WTC11 (cell line): ENCODE measurements at regions of chr4 and their contacts with region 1.

Region 1: GRCh38 chr4:154416190-154416547 is 75.4 kb downstream of the DCHS2 start:
- DNase-seq: peak; percentile 59
- ATAC-seq: peak; percentile 74
- H3K4me3 Mint-ChIP-seq: peak overlapping the region; percentile 95
- H3K27ac Mint-ChIP-seq: no peak overlapping the region
- H3K4me1 Mint-ChIP-seq: peaks cover 19% of the 10 kb centered on the region
- H3K27me3 Mint-ChIP-seq: peaks cover 17% of the 10 kb centered on the region
- CTCF ChIP-seq: no peak

Region 2: DNA sequence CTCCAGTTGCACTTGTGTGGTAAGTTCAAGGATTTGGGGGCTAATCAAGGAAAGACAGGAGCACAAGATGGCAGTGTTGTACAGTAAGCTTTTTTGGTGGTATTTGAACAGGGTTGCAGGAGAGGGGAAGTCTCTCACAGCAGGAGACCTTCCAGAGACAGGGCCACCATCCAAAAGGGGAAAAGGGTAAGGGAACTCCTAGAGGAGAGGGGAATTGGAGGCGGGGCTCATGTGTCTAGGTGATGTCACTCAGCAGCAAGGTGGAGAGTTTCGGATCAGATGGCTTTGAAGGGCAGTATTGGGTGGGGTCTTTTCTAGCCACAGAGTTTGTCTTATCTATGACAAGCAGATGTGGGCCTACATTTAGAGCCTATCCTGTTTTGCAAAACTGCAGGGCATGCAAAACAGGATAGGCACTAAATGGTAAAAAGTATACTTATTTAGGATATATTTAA is 642.9 kb before region 1 on chr4:
- CTCF ChIA-PET with region 1: no interaction called
- POLR2A ChIA-PET with region 1: no interaction called
- DNase-seq: peak; percentile 68
- ATAC-seq: peak; percentile 99
- H3K4me3 Mint-ChIP-seq: no peak overlapping the region
- H3K27ac Mint-ChIP-seq: peak overlapping the region; percentile 32; the same call in 1 of the 2 replicates
- H3K4me1 Mint-ChIP-seq: peaks cover 28% of the 10 kb centered on the region
- H3K27me3 Mint-ChIP-seq: no peaks in the 10 kb centered on the region
- CTCF ChIP-seq: no peak

Region 3: DNA sequence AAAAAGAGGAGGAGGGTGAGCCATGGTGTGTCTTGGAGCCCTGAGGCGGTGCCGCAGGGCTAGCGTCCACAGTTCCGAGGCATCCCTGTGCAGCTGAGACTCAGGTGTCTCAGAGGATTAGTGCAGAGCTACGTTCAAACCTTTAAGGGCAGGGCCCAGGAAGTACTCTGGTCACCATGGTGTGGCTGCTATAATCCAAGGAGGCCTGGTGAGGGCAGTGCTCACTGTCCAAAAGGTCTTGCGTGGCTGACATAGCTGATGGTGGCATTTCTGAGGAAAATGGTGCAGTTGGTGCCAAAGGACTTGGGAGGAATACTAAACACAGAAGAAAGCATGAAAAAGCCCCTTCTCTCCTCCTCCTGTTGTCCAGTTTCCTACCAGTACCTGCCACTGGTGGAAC is 71.5 kb before region 1 on chr4:
- CTCF ChIA-PET with region 1: interaction called, 11 read pairs
- POLR2A ChIA-PET with region 1: no interaction called
- DNase-seq: peak; percentile 42
- ATAC-seq: peak; percentile 99
- H3K4me3 Mint-ChIP-seq: no peak overlapping the region
- H3K27ac Mint-ChIP-seq: no peak overlapping the region
- H3K4me1 Mint-ChIP-seq: no peaks in the 10 kb centered on the region
- H3K27me3 Mint-ChIP-seq: no peaks in the 10 kb centered on the region
- CTCF ChIP-seq: no peak

Region 4: GRCh38 chr4:154376486-154376885 is 39.7 kb before region 1 on chr4:
- CTCF ChIA-PET with region 1: no interaction called
- POLR2A ChIA-PET with region 1: no interaction called
- DNase-seq: no peak
- ATAC-seq: no peak
- H3K4me3 Mint-ChIP-seq: no peak overlapping the region
- H3K27ac Mint-ChIP-seq: no peak overlapping the region
- H3K4me1 Mint-ChIP-seq: no peaks in the 10 kb centered on the region
- H3K27me3 Mint-ChIP-seq: no peaks in the 10 kb centered on the region
- CTCF ChIP-seq: no peak

Region 5: DNA sequence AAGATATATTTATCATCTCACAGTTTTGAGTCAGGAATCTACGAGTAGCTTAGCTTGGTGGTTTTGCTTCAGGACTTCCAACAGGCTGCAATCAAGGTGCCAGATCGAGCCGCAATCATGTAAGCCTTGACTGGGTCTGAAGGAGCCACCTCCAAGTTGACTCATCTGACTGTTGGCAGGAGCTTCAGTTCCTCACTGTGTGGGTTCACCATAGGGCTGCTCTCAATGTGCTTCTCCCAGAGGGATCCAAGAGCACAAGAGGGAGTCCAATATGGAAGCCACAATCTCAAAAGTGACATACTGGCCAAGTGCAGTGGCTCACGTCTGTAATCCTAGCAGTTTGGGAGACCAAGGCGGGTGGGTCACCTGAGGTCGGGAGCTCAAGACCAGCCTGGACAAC is 48.9 kb after region 1 on chr4:
- CTCF ChIA-PET with region 1: interaction called, 16 read pairs
- POLR2A ChIA-PET with region 1: no interaction called
- DNase-seq: no peak
- ATAC-seq: no peak
- H3K4me3 Mint-ChIP-seq: no peak overlapping the region
- H3K27ac Mint-ChIP-seq: no peak overlapping the region
- H3K4me1 Mint-ChIP-seq: no peaks in the 10 kb centered on the region
- H3K27me3 Mint-ChIP-seq: no peaks in the 10 kb centered on the region
- CTCF ChIP-seq: no peak

Region 6: DNA sequence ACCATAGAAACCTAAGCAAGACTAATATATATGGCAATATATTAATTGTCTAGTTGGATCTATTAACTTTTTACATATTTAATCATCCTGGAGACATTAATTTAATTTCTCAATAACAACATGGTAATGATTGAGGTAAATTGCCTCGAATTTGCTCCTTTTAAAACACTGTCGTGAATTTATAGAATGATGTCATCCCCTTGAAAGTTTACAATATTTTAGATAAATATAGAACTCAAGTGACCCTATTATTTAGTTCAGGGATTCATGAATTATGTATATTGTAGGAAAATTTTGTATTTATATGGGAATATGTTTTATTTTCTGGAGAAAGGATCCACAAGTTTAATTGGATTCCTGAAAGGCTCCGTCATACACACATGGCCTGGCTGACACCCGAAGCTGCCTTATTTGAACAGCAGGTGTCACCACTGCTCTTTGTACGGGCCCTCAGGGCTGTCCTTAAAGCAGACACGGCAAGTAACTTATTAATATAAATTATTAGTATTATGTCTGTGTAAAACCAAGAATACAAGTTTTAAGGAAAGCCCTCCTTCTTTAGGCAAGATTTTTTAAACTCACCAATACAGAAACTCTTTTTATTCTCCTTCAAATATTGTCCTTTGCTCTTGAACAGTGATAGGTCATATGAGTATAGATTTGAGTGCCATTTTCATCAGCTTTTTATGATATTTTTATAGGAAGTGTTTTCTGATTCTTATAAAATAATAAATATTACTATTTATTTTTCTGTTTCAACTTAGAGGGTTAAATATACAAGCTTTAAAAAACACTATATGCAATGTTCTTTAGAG is 135.9 kb after region 1 on chr4:
- CTCF ChIA-PET with region 1: interaction called, 11 read pairs
- POLR2A ChIA-PET with region 1: no interaction called
- DNase-seq: peak; percentile 68
- ATAC-seq: peak; percentile 57
- H3K4me3 Mint-ChIP-seq: no peak overlapping the region
- H3K27ac Mint-ChIP-seq: no peak overlapping the region
- H3K4me1 Mint-ChIP-seq: peaks cover 9% of the 10 kb centered on the region
- H3K27me3 Mint-ChIP-seq: no peaks in the 10 kb centered on the region
- CTCF ChIP-seq: peak; percentile 51

Region 7: GRCh38 chr4:155367608-155368007 is 951.4 kb after region 1 on chr4:
- CTCF ChIA-PET with region 1: no interaction called
- POLR2A ChIA-PET with region 1: no interaction called
- DNase-seq: no peak
- ATAC-seq: no peak
- H3K4me3 Mint-ChIP-seq: no peak overlapping the region
- H3K27ac Mint-ChIP-seq: no peak overlapping the region
- H3K4me1 Mint-ChIP-seq: peaks cover 8% of the 10 kb centered on the region
- H3K27me3 Mint-ChIP-seq: no peaks in the 10 kb centered on the region
- CTCF ChIP-seq: no peak